ENCODE measurements at regions of chr16 and their contacts with region 1.

Region 1: DNA sequence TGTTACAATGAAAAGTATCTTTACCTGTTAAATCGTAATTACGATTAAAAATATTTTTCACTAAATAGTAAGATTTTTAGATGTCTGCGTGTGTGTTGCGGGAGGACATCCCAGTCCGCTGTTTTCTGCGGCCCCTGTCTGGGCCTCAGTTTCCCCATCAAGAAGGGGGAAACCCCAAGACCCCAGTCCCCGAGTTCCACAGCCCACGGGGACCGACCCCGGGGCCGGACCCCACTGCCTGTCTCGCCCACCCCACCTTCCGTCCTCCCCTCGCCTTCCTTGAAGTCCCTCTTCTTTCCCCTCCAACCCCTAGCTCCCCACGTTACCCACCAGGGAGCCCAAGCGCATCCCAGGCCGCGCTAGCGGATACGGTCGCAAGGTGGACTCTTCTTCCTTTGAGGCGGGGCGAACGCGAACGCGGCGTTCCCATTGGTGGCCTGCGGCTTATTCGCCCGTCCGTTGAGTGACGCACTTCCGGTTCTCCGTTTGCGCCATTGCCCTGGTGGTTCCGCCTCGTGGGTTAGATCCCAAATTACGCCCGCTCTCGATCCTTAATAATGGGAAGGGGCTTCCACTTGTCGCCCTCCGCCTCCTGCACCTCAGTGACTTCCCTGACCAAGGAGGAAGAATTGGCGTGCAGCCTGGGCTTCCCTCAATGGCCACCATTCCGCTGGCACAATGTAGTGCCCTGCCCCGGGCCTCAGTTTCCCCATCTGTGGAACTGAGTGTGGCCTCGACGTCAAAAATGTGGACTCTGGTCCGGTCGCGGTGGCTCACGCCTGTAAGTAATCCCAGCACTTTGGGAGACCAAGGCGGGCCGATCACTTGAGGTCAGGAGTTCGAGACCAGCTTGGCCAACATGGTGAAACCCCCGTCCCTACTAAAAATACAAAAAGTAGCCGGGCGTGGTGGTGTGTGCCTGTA is at the start of gene NSMCE1:
- DNase-seq: peak; percentile 94 to 100 (median 98)

Region 2: GRCh38 chr16:26840691-26841090 is 427.9 kb before region 1 on chr16:
- intact Hi-C with region 1: no loop called
- DNase-seq: no peak

Region 3: DNA sequence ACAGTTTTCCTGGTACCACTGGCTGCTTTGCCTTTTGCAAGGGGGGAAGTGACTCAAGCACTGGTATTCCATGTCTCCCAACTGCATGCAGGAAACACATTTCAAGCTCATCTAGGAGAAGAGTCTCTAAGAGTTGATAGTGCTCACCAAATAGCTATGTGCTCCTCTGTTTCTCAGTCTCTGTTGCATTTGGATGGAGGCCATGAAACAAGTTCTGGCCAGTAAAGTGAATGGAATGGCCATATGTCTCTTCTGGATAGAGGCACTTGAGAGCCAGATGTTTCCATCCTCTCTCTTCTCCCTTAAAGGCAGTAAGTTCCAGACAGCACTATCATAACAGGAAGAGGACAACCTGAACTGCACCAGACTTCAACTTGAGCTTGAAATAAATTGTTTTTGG is 141.3 kb before region 1 on chr16:
- intact Hi-C with region 1: no loop called
- DNase-seq: no peak

Region 4: GRCh38 chr16:27138266-27138665 is 130.4 kb before region 1 on chr16:
- intact Hi-C with region 1: no loop called
- DNase-seq: no peak

Region 5: DNA sequence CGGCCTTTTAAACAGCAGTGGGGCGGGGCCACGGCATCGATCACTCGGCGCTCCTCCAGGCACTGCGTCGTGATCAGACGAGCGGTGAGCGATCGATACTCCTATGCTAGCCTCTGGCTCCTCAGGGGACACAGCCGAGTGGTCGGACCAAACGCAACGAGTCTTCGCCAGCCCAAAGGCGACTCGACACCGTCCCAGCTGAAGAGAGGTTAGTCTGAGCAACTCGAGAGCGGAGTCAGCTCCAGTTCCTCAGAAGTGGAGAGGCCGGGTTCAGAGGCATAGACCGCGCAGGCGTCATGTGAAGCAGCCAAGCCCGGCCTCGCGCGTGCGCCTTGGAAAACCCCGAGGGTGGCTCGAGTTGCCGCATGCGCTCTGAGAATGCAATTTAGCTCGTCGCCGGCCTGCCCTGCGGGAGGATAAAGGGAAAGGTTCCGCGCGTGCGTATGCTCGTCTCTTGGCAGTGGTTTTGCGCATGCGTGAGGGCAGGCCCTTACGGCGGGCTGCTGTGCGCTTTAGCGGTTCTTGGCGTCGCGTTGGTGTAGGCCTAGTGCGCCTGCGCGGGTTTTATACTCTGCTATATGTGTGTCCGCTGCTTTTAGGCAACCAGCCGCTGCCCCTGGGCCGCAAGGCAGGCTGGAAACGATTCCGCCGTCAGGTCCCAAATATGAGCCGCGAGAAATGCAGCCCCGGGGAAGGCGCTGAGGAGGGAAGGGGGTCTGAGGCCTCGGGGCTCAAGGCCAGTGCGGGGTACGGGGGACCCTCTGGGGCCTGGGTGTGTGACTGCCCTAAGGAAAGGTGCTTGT is 65.0 kb before region 1 on chr16 and contains the start of gene KDM8:
- intact Hi-C with region 1: loop called (anchors 5 kb)
- DNase-seq: peak; percentile 98 to 100 (median 99)

Measured in posterior cingulate gyrus (tissue), 11 donors.